ENCODE measurements at regions of chr10 and their contacts with region 1.

Region 1: GRCh38 chr10:47024399-47025252 is 113.4 kb downstream of the PTPN20 start:
- DNase-seq: peak in 2 of 3 donors; percentile 76 to 80
- ATAC-seq: peak in 1 of 2 donors; percentile 65
- H3K4me3 ChIP-seq: no peak overlapping the region
- H3K27ac ChIP-seq: no peak overlapping the region
- H3K4me1 ChIP-seq: no peaks in the 10 kb centered on the region
- H3K27me3 ChIP-seq: no peaks in the 10 kb centered on the region

Region 2: DNA sequence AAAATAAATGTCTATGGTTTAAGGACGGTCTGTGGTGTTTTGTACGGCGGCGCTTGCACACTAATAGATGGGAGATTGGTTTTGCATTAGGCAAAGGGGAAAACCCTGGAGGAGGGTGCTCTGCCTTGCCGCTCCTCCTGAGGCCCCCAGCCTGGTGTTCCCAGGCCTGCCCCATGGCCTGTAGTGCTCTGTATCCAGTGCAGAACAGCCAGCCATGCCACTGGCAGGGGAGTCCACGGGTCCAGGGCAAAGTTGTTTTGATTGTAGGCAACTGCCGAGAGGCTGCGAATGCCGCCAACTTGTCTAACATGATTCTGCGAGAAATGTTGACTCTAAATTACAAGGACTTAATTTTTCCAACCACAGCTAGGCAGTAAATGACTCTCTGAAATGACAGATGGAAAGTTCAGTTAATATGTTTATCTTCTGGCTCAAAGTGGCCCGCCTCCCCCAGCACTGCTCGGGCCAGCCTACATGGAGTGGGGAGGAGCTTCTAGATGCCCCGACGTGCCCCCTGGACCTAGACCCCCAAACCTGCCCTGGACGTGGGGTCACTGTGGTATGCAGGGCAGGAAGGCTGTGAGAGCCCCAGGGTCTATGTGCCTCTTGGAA is 170.8 kb after region 1 on chr10:
- intact Hi-C with region 1: no loop called
- DNase-seq: no peak
- ATAC-seq: no peak
- H3K4me3 ChIP-seq: no peak overlapping the region
- H3K27ac ChIP-seq: no peak overlapping the region
- H3K4me1 ChIP-seq: no peaks in the 10 kb centered on the region
- H3K27me3 ChIP-seq: no peaks in the 10 kb centered on the region

Region 3: DNA sequence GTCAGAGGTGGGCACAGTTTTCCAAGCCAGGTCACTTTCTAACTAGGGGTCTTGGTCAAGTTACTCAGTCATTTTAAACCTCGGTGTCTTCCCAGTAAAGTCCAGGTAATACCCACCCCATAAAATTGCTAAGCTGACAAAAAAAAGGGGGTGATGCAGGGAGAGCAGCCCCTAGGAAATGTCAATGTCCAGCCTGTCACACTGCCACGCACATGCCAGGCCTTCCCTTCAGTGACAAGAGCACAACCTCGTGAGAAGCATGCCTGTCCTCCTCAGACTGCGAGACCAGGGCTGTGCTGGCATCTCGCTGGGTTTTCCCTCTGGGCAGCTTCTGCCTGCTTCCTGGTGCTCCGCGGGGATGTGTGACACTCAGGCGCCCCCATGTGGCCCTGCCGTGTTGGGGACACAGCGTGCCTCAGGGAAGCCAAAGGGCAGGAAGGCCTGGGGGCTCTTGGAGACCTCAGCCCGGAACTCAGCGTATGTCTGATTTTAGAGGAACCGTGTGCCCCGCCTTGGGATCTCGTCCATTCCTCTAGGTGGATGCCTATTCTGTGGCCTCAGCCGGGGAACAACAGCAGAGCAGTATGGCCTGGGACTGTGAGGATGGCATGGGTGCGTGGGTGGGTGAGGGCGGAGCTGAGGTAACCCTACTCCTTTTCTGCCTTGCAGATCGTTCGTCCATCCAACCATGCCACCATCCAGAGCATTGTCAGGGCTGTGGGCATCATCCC is 287.5 kb after region 1 on chr10:
- intact Hi-C with region 1: loop called in 2 of 4 experiments (anchors 2 to 5 kb)
- DNase-seq: peak; percentile 85 to 96 (median 94)
- ATAC-seq: peak; percentile 94 to 95
- H3K4me3 ChIP-seq: no peak overlapping the region
- H3K27ac ChIP-seq: no peak overlapping the region
- H3K4me1 ChIP-seq: no peaks in the 10 kb centered on the region
- H3K27me3 ChIP-seq: no peaks in the 10 kb centered on the region

Region 4: GRCh38 chr10:47339759-47340607 is 315.4 kb after region 1 on chr10:
- intact Hi-C with region 1: loop called in 1 of 4 experiments (anchors 5 kb)
- DNase-seq: no peak
- ATAC-seq: peak; percentile 18 to 22
- H3K4me3 ChIP-seq: no peak overlapping the region
- H3K27ac ChIP-seq: no peak overlapping the region
- H3K4me1 ChIP-seq: no peaks in the 10 kb centered on the region
- H3K27me3 ChIP-seq: no peaks in the 10 kb centered on the region

Measured in right cardiac atrium (tissue), 5 donors.